Dendritic cell treated with granulocyte-macrophage colony-stimulating factor and Interleukin-4, amounts not matched to agents 40 ng/mL and 50 ng/mL, for 4 days (primary cell): ENCODE measurements at regions of chr14 and their contacts with region 1.

Region 1: GRCh38 chr14:61461808-61462275 is 140.5 kb downstream of the PRKCH start:
- H3K4me3 Mint-ChIP-seq: no peak overlapping the region
- H3K27ac Mint-ChIP-seq: no peak overlapping the region
- H3K4me1 Mint-ChIP-seq: peaks cover under 1% of the 10 kb centered on the region
- H3K27me3 Mint-ChIP-seq: no peaks in the 10 kb centered on the region

Region 2: GRCh38 chr14:61280526-61281185 is 181.2 kb before region 1 on chr14:
- intact Hi-C with region 1: no loop called
- H3K4me3 Mint-ChIP-seq: peak overlapping the region; percentile 70
- H3K27ac Mint-ChIP-seq: no peak overlapping the region
- H3K4me1 Mint-ChIP-seq: peaks cover 16% of the 10 kb centered on the region
- H3K27me3 Mint-ChIP-seq: peaks cover 63% of the 10 kb centered on the region

Region 3: GRCh38 chr14:61527325-61528100 is 65.7 kb after region 1 on chr14:
- intact Hi-C with region 1: no loop called
- H3K4me3 Mint-ChIP-seq: no peak overlapping the region
- H3K27ac Mint-ChIP-seq: peak overlapping the region; percentile 59
- H3K4me1 Mint-ChIP-seq: peaks cover 42% of the 10 kb centered on the region
- H3K27me3 Mint-ChIP-seq: peaks cover 2% of the 10 kb centered on the region

Region 4: DNA sequence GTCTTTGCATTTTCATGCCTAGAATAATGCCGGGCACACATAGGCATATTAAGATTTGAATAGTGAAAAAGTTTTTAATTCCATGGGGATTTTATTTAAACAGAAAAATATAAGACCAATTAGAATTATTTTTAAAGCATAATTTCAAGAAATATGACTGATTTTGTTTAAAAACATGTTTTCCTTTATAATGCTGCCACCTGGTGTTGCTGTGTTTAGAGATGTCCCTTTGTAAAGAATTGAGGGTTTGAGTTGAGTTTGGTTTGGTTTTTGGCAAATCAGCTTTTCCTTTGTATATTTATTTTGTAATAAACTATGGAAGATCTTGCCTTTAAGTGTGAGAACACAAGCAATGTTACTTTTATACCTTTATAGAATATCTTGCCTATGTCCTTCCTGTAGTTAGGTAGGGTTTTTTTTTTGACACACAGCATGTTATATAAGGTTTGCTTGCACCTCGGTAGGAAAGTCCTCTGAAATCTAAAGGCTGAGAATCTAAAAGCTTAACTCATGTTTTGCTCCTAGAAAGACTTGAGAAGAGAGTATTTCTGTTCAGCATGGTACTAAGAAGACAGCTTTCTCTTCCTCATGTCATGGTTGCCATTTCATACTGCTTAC is 269.0 kb after region 1 on chr14:
- intact Hi-C with region 1: loop called (anchors 5 kb)
- H3K4me3 Mint-ChIP-seq: no peak overlapping the region
- H3K27ac Mint-ChIP-seq: peak overlapping the region; percentile 14
- H3K4me1 Mint-ChIP-seq: peaks cover 11% of the 10 kb centered on the region
- H3K27me3 Mint-ChIP-seq: no peaks in the 10 kb centered on the region

Region 5: GRCh38 chr14:61940666-61941423 is 479.0 kb after region 1 on chr14:
- intact Hi-C with region 1: no loop called
- H3K4me3 Mint-ChIP-seq: no peak overlapping the region
- H3K27ac Mint-ChIP-seq: no peak overlapping the region
- H3K4me1 Mint-ChIP-seq: no peaks in the 10 kb centered on the region
- H3K27me3 Mint-ChIP-seq: peaks cover 4% of the 10 kb centered on the region